AG04450 (cell line): ENCODE measurements at regions of chr11 and their contacts with region 1.

Region 1: DNA sequence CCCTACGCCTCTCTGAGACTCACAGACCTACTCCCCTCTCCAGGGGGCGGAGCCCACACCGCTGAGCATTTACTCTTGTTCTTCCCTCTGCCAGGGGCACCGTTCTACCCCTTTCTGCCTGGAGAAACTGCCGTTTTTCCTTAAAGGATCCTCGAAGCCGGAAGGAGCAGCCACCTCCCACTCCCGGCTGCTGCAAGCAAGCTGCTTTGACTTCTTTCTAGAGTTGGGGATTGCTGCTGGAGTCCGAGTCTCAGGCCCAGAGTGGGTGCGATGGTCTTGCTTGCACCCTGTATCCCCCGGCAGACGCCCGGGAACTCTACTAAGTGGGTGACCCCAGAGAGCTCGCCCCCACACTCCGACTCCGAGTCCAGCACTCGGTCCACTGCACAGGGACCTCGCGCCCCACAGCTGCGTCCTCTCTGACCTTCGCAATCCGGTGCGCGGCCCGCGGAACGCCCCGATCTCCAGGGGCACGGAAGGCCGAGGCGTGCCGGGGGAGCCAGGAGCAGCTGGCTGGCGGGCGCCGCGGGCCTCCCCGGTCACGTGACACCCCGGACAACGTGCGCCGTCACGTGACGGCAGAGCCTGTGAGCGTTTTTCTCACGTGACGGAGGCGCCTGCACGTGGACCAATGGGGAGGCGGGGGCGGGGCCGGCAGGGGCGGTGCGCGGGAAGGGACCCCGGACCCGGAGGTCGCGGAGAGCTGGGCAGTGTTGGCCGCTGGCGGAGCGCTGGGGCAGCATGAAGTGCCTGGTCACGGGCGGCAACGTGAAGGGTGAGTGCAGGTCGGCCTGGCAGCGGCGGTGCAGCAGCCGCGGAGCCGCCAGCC is at the start of gene RAD9A:
- DNase-seq: peak; percentile 81
- H3K4me3 ChIP-seq: peak within 1 kb of the TSS; percentile 92
- H3K27ac ChIP-seq: peak within 1 kb of the TSS; percentile 87
- H3K27me3 ChIP-seq: no peaks in the 10 kb centered on the region
- CTCF ChIP-seq: no peak
- polyA plus RNA-seq, gene RAD9A: 3.2 and 4.1 TPM in 2 replicates

Region 2: DNA sequence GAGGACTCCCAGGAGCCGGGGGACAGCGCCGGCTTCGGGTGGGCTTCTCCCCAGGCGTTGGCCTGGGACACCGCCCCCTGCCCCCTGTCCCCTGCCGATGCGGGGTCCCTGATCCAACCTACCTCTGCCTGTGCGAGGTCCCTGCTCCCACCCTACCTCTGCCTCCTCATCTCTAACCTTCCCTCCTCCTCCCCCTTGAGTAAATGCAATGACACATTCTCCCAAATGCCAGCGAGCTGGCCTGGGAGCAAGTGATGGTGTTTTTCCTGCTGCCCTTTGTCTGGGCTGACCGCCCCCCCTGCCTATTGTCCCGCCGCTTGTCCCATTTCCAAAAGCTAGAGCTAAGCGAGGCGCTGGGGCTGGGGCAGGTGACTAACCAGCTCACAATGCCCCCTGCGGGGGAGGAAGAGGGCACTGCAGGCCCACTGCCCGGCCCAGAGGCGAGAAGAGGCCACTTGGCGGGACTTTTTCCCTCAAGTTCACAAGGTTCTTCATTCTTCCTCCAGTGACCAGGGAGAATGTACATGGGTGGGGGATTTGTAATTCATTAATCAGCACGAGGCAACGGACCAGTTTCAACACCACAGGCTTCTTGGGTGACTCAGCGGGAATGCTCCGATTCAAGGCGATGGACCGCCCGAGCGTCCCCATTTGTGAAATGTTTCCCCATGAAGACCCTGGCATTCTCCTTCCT is 17.4 kb before region 1 on chr11:
- CTCF ChIA-PET with region 1: interaction called, 5 read pairs
- POLR2A ChIA-PET with region 1: interaction called, 12 read pairs
- DNase-seq: peak; percentile 86
- H3K4me3 ChIP-seq: peak overlapping the region; percentile 67
- H3K27ac ChIP-seq: peak overlapping the region; percentile 99
- H3K27me3 ChIP-seq: no peaks in the 10 kb centered on the region
- CTCF ChIP-seq: peak; percentile 34

Region 3: GRCh38 chr11:68076371-68077042 is 685.0 kb after region 1 on chr11:
- CTCF ChIA-PET with region 1: no interaction called
- POLR2A ChIA-PET with region 1: no interaction called
- DNase-seq: no peak
- H3K4me3 ChIP-seq: no peak overlapping the region
- H3K27ac ChIP-seq: no peak overlapping the region
- H3K27me3 ChIP-seq: no peaks in the 10 kb centered on the region
- CTCF ChIP-seq: peak; percentile 44